ENCODE measurements at regions of chrX and their contacts with region 1.

Region 1: GRCh38 chrX:40108959-40109287 is 11.2 kb upstream of the BCOR start:
- H3K4me3 Mint-ChIP-seq: peak overlapping the region; percentile 45
- H3K27ac Mint-ChIP-seq: no peak overlapping the region
- H3K4me1 Mint-ChIP-seq: peaks cover 23% of the 10 kb centered on the region
- H3K27me3 Mint-ChIP-seq: peaks cover 3% of the 10 kb centered on the region

Region 2: GRCh38 chrX:40153335-40154249 is 44.7 kb after region 1 on chrX:
- intact Hi-C with region 1: loop called (anchors 5 kb)
- H3K4me3 Mint-ChIP-seq: peak overlapping the region; percentile 68
- H3K27ac Mint-ChIP-seq: peak overlapping the region; percentile 63
- H3K4me1 Mint-ChIP-seq: peaks cover 43% of the 10 kb centered on the region
- H3K27me3 Mint-ChIP-seq: peaks cover 26% of the 10 kb centered on the region